Naive thymus-derived CD4-positive, alpha-beta T cell (primary cell): ENCODE measurements at regions of chr5 and their contacts with region 1.

Region 1: DNA sequence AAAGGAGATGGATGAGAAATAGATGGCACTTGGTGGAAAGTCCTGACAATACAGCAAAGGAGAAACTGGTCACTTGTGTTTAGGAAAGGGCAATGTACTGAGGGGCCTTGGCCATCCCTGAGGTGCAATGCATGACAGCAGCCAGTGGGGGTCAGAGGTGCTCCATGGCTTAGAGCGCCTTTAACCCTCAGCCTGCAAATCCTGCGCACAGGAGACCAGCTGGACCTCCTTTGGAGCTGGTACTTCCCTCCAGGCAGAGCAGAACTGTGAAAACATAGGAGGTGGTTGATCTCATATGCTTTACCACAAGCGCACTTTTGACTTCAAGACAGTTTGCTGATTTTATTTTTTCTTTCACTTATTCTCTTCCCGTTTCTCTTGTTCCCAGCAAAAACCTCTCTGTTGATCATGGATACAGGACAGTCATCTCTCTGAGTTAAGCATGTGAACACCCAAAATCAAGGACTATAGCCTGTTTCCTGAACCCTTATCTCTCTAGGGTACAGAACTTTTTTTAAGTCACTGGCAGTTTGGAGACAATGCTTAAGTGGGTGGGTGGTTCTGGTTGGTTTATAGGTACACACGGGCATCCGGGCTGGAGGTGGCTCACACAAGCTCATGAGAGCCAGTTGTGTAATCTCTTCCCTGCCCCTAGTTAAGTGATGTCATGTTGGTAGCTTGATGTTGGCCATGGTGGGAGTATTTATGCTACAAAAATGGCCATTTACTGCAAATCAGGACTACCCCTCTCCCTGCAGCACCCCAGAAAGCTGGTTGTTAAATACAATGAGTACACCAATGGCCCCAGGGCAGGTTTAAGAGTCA is 37.6 kb upstream of the ANKRD55 start:
- DNase-seq: peak; percentile 47 to 73 (median 68)
- ATAC-seq: peak; percentile 97
- H3K4me3 ChIP-seq: no peak overlapping the region
- H3K4me3 Mint-ChIP-seq: peak overlapping the region; percentile 37 to 88 (median 76)
- H3K27ac ChIP-seq: no peak overlapping the region
- H3K27ac Mint-ChIP-seq: peak overlapping the region in 7 of 9 donors; percentile 44 to 86 (median 67)
- H3K4me1 ChIP-seq: peaks cover 0 to 9% of the 10 kb centered on the region in 2 donors
- H3K4me1 Mint-ChIP-seq: peaks cover 12 to 33% (median 21%) of the 10 kb centered on the region in 7 donors
- H3K27me3 ChIP-seq: no peaks in the 10 kb centered on the region
- H3K27me3 Mint-ChIP-seq: peaks cover 0 to 6% (median 0%) of the 10 kb centered on the region in 5 donors

Region 2: DNA sequence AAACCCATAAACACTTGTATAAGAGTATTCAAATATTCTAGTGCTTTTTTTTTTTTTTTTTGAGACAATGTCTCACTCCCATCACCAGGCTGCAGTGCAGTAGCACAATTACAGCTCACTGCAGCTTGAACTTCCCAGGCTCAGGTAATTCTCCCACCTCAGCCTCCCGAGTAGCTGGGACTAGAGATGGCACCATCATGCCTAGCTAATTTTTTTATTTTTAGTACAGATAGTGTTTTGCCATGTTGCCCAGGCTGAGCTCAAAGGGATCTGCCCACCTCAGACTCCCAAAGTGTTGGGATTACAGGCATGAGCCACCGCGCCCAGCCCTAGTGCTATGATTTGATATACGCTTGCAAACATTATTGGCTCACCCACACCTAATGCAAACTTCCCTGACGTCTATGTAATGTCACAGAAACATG is 287.8 kb before region 1 on chr5:
- CTCF ChIA-PET with region 1: interaction called, 6 read pairs
- POLR2A ChIA-PET with region 1: no interaction called
- intact Hi-C with region 1: loop called (anchors 1 kb)
- DNase-seq: peak in 7 of 9 donors; percentile 42 to 63 (median 53)
- ATAC-seq: peak; percentile 46
- H3K4me3 ChIP-seq: peak overlapping the region; percentile 44
- H3K4me3 Mint-ChIP-seq: peak overlapping the region; percentile 48 to 96 (median 84)
- H3K27ac ChIP-seq: peak overlapping the region; percentile 67
- H3K27ac Mint-ChIP-seq: peak overlapping the region; percentile 24 to 98 (median 85)
- H3K4me1 ChIP-seq: peaks cover 0 to 63% of the 10 kb centered on the region in 2 donors
- H3K4me1 Mint-ChIP-seq: peaks cover 37 to 94% (median 84%) of the 10 kb centered on the region in 7 donors
- H3K27me3 ChIP-seq: no peaks in the 10 kb centered on the region
- H3K27me3 Mint-ChIP-seq: no peaks in the 10 kb centered on the region

Region 3: GRCh38 chr5:56164376-56164775 is 106.4 kb before region 1 on chr5:
- CTCF ChIA-PET with region 1: no interaction called
- POLR2A ChIA-PET with region 1: no interaction called
- intact Hi-C with region 1: no loop called
- DNase-seq: no peak
- ATAC-seq: no peak
- H3K4me3 ChIP-seq: no peak overlapping the region
- H3K4me3 Mint-ChIP-seq: peak overlapping the region in 1 of 10 donors; percentile 23
- H3K27ac ChIP-seq: no peak overlapping the region
- H3K27ac Mint-ChIP-seq: peak overlapping the region in 6 of 9 donors; percentile 29 to 86 (median 71)
- H3K4me1 ChIP-seq: peaks cover 0 to 42% of the 10 kb centered on the region in 2 donors
- H3K4me1 Mint-ChIP-seq: peaks cover 29 to 84% (median 71%) of the 10 kb centered on the region in 7 donors
- H3K27me3 ChIP-seq: no peaks in the 10 kb centered on the region
- H3K27me3 Mint-ChIP-seq: peaks cover 0 to 2% (median 0%) of the 10 kb centered on the region in 5 donors

Region 4: DNA sequence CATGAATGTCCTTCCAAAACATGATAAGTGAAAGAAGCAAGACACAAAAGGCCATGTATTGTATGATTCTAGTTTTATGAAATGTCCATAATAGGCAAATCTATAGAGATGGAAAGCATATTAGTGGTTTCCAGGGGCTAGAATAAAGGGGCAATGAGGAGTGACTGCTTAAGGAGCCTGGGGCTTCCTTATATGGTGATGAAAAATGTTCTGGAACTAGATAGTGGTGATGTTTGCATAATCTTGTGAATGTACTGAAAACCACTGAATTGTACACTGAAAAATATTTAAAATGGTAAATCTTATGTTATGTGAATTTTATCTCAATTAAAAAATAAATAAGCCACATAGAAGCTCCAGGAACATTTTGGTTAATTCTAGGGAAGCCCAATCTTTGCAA is 106.8 kb after region 1 on chr5:
- CTCF ChIA-PET with region 1: no interaction called
- POLR2A ChIA-PET with region 1: no interaction called
- intact Hi-C with region 1: no loop called
- DNase-seq: no peak
- ATAC-seq: no peak
- H3K4me3 ChIP-seq: no peak overlapping the region
- H3K4me3 Mint-ChIP-seq: no peak overlapping the region
- H3K27ac ChIP-seq: no peak overlapping the region
- H3K27ac Mint-ChIP-seq: no peak overlapping the region
- H3K4me1 ChIP-seq: no peaks in the 10 kb centered on the region
- H3K4me1 Mint-ChIP-seq: peaks cover 0 to 9% (median 0%) of the 10 kb centered on the region in 7 donors
- H3K27me3 ChIP-seq: no peaks in the 10 kb centered on the region
- H3K27me3 Mint-ChIP-seq: peaks cover 0 to 12% (median 0%) of the 10 kb centered on the region in 5 donors

Region 5: DNA sequence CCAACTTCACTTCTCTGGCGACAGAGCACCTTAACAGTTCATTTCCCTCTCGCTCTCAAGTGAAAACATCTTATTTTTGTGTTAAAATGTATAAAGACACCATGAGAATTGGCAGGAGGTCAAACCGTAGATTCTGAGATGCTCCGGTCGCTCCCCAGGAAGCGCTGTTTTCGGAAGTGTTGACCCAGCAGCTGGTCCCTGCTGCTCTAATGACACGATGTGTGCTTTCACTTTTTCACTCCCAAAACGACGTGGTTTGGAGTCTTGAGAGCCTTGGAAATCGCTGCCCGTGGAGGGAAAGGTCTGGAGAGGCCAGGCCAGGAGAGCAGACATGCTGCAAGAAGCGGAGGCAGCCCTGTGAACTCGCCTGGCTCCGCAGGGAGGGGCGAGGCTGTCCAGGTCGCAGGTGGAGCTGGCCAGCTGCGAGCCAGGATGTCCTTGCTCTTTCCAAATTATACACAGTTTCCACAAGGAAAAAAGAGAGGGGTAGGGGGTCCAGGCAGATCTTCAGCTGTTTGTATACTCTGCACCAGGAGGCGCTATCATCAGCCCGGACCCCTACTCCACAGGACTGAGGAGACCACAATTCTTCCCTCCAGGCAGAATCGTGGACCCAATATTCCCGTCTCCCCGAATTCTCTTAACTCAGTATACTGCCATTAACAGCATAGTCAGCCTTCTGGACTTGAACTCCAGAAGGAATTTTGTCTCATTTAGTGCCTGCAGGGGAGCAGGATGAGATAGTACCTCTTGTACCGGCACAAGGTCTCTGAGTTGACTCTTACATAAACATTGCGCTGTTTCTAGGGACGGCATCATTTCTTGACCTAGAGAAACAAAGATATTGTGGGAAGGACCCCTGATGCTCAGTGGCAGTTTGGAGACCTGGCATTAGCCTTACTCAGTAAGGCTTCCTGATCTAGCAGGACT is 210.9 kb after region 1 on chr5:
- CTCF ChIA-PET with region 1: interaction called, 6 read pairs
- POLR2A ChIA-PET with region 1: no interaction called
- intact Hi-C with region 1: loop called (anchors 1 to 2 kb)
- DNase-seq: peak in 6 of 9 donors; percentile 19 to 44 (median 33)
- ATAC-seq: peak; percentile 12
- H3K4me3 ChIP-seq: peak overlapping the region; percentile 60
- H3K4me3 Mint-ChIP-seq: peak overlapping the region; percentile 80 to 95 (median 90)
- H3K27ac ChIP-seq: peak overlapping the region; percentile 80
- H3K27ac Mint-ChIP-seq: peak overlapping the region; percentile 86 to 95 (median 90)
- H3K4me1 ChIP-seq: peaks cover 0 to 37% of the 10 kb centered on the region in 2 donors
- H3K4me1 Mint-ChIP-seq: peaks cover 19 to 53% (median 45%) of the 10 kb centered on the region in 7 donors
- H3K27me3 ChIP-seq: no peaks in the 10 kb centered on the region
- H3K27me3 Mint-ChIP-seq: no peaks in the 10 kb centered on the region

Region 6: DNA sequence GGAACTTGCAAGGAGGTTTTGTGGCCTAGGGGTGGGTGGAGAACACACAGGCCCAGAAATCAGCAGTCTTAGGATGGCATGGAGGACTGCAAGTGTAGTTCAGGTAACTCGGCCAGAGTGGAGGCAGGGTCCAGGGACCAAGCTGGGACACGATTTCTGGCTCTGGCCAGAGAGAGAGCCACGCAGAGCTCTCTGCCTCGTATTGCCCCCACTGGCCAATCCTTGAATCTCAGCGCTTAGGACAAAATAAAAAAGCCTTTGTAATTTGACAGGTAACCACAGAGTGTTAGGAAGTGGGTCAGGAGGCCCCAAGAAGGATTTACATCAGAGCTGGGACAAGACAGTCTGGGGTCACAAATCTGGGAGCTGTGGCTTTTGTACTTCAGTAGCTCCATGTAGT is 556.3 kb after region 1 on chr5:
- CTCF ChIA-PET with region 1: interaction called, 15 read pairs
- POLR2A ChIA-PET with region 1: interaction called, 4 read pairs
- intact Hi-C with region 1: no loop called
- DNase-seq: peak in 1 of 9 donors; percentile 34
- ATAC-seq: peak; percentile 37
- H3K4me3 ChIP-seq: no peak overlapping the region
- H3K4me3 Mint-ChIP-seq: peak overlapping the region; percentile 18 to 93 (median 59)
- H3K27ac ChIP-seq: peak overlapping the region; percentile 51
- H3K27ac Mint-ChIP-seq: peak overlapping the region in 8 of 9 donors; percentile 56 to 95 (median 80)
- H3K4me1 ChIP-seq: peaks cover 38 to 84% of the 10 kb centered on the region in 2 donors
- H3K4me1 Mint-ChIP-seq: peaks cover 75 to 100% (median 95%) of the 10 kb centered on the region in 7 donors
- H3K27me3 ChIP-seq: no peaks in the 10 kb centered on the region
- H3K27me3 Mint-ChIP-seq: no peaks in the 10 kb centered on the region

Region 7: GRCh38 chr5:56900858-56901578 is 630.2 kb after region 1 on chr5:
- CTCF ChIA-PET with region 1: interaction called, 4 read pairs
- POLR2A ChIA-PET with region 1: no interaction called
- intact Hi-C with region 1: loop called (anchors 1 to 5 kb)
- DNase-seq: peak in 7 of 9 donors; percentile 20 to 62 (median 51)
- ATAC-seq: peak; percentile 81
- H3K4me3 ChIP-seq: no peak overlapping the region
- H3K4me3 Mint-ChIP-seq: no peak overlapping the region
- H3K27ac ChIP-seq: no peak overlapping the region
- H3K27ac Mint-ChIP-seq: no peak overlapping the region
- H3K4me1 ChIP-seq: no peaks in the 10 kb centered on the region
- H3K4me1 Mint-ChIP-seq: peaks cover 0 to 6% (median 0%) of the 10 kb centered on the region in 7 donors
- H3K27me3 ChIP-seq: no peaks in the 10 kb centered on the region
- H3K27me3 Mint-ChIP-seq: peaks cover 0 to 15% (median 0%) of the 10 kb centered on the region in 5 donors

Region 8: DNA sequence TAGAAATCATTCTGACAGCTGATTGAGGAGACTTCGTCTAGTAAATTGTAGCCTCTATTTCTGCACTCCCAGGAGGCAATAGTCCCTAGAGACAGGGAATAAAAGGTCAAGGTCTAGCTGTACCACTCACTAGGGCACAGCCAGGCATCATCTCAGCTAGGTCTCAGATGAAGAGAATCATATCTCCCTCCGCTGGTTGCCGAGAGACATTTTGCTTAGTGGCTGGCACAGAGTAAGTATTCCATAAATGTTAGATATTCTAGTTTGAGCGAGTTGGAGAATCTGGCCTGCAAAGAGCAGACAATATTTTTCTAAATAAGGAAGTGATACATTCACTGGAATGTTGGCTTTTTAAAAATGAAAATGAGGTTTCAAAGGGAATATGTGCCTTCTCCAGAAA is 1392.2 kb after region 1 on chr5:
- CTCF ChIA-PET with region 1: no interaction called
- POLR2A ChIA-PET with region 1: no interaction called
- intact Hi-C with region 1: no loop called
- DNase-seq: no peak
- ATAC-seq: no peak
- H3K4me3 ChIP-seq: no peak overlapping the region
- H3K4me3 Mint-ChIP-seq: no peak overlapping the region
- H3K27ac ChIP-seq: no peak overlapping the region
- H3K27ac Mint-ChIP-seq: no peak overlapping the region
- H3K4me1 ChIP-seq: no peaks in the 10 kb centered on the region
- H3K4me1 Mint-ChIP-seq: no peaks in the 10 kb centered on the region
- H3K27me3 ChIP-seq: no peaks in the 10 kb centered on the region
- H3K27me3 Mint-ChIP-seq: peaks cover 0 to 28% (median 11%) of the 10 kb centered on the region in 5 donors